CD8-positive, alpha-beta memory T cell (primary cell): ENCODE measurements at regions of chr7 and their contacts with region 1.

Region 1: DNA sequence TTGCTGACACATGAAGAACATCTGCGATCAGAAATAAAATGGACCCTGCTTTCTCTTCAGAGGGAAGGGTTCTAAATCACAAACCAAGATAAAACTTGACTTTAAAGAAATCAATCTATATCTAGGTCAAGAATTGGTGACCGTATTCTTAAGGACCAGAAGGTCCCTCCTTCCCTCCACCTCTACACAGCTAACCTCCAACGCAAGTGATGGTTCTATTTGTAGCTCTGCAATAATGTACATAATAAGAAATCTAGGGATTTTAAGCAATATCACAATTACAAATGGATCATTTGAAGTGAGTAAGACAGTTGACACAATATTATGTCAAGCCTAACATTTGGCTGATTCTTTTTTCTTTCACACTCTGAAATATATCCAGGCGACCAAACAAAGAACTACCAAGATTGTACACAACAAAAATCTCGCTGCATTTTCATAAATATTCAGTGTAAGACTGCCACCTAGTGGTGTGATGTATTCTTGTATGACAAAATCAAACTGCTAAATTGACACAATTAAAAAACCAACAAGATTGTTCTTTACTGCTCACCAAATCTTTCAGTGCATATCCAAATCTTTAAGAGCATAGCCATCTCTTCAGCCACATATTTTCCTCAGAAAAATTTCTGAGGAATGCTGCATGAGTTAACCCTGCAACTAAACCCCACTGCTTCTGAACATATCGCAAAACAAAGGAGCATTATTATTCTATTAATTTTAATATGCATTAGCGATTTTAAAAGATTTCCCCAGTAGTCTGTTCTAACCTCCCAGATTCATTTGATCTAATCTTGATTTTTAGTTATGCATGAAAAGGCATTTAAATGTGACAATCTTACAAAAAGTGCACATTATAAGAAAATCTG is 44.5 kb downstream of the ICA1 start:
- DNase-seq: peak in 2 of 5 donors; percentile 59 to 60
- H3K4me3 ChIP-seq: no peak overlapping the region
- H3K4me3 Mint-ChIP-seq: no peak overlapping the region
- H3K27ac ChIP-seq: no peak overlapping the region
- H3K27ac Mint-ChIP-seq: no peak overlapping the region
- H3K4me1 ChIP-seq: no peaks in the 10 kb centered on the region
- H3K4me1 Mint-ChIP-seq: peaks cover 0 to 3% (median 2%) of the 10 kb centered on the region in 3 donors
- H3K27me3 ChIP-seq: no peaks in the 10 kb centered on the region
- H3K27me3 Mint-ChIP-seq: no peaks in the 10 kb centered on the region

Region 2: GRCh38 chr7:7681179-7681935 is 536.1 kb before region 1 on chr7:
- CTCF ChIA-PET with region 1: interaction called, 11 read pairs
- POLR2A ChIA-PET with region 1: no interaction called
- DNase-seq: peak in 3 of 5 donors; percentile 14 to 47 (median 41)
- H3K4me3 ChIP-seq: no peak overlapping the region
- H3K4me3 Mint-ChIP-seq: peak overlapping the region in 2 of 7 donors; percentile 16 to 35
- H3K27ac ChIP-seq: no peak overlapping the region
- H3K27ac Mint-ChIP-seq: peak overlapping the region in 5 of 8 donors; percentile 6 to 69 (median 30)
- H3K4me1 ChIP-seq: peaks cover 8% of the 10 kb centered on the region
- H3K4me1 Mint-ChIP-seq: peaks cover 30 to 39% (median 31%) of the 10 kb centered on the region in 3 donors
- H3K27me3 ChIP-seq: no peaks in the 10 kb centered on the region
- H3K27me3 Mint-ChIP-seq: no peaks in the 10 kb centered on the region

Region 3: GRCh38 chr7:8005276-8006094 is 211.9 kb before region 1 on chr7:
- CTCF ChIA-PET with region 1: no interaction called
- POLR2A ChIA-PET with region 1: no interaction called
- DNase-seq: no peak
- H3K4me3 ChIP-seq: no peak overlapping the region
- H3K4me3 Mint-ChIP-seq: no peak overlapping the region
- H3K27ac ChIP-seq: no peak overlapping the region
- H3K27ac Mint-ChIP-seq: peak overlapping the region in 4 of 8 donors; percentile 13 to 81 (median 38)
- H3K4me1 ChIP-seq: no peaks in the 10 kb centered on the region
- H3K4me1 Mint-ChIP-seq: peaks cover 28 to 36% (median 33%) of the 10 kb centered on the region in 3 donors
- H3K27me3 ChIP-seq: no peaks in the 10 kb centered on the region
- H3K27me3 Mint-ChIP-seq: no peaks in the 10 kb centered on the region